PC-3 (cell line): ENCODE measurements at regions of chrX and their contacts with region 1.

Region 1: GRCh38 chrX:120120223-120120622 is 4.5 kb upstream of the RHOXF1 start:
- DNase-seq: peak; percentile 77
- ATAC-seq: peak; percentile 90
- H3K4me3 ChIP-seq: no peak overlapping the region
- H3K27ac ChIP-seq: no peak overlapping the region
- H3K4me1 ChIP-seq: 0 out of 2 replicates have a peak, but pooled peaks cover 3% of the 10 kb centered on the region
- H3K27me3 ChIP-seq: no peaks in the 10 kb centered on the region
- CTCF ChIP-seq: no peak

Region 2: GRCh38 chrX:120090208-120090607 is 30.0 kb before region 1 on chrX:
- CTCF ChIA-PET with region 1: interaction called, 16 read pairs
- POLR2A ChIA-PET with region 1: no interaction called
- intact Hi-C with region 1: no loop called
- DNase-seq: no peak
- ATAC-seq: no peak
- H3K4me3 ChIP-seq: no peak overlapping the region
- H3K27ac ChIP-seq: no peak overlapping the region
- H3K4me1 ChIP-seq: no peaks in the 10 kb centered on the region
- H3K27me3 ChIP-seq: no peaks in the 10 kb centered on the region
- CTCF ChIP-seq: peak; percentile 24; the same call in 1 of the 2 replicates